Natural killer cell (primary cell): ENCODE measurements at regions of chr11 and their contacts with region 1.

Region 1: GRCh38 chr11:58513747-58514367 is 6.0 kb upstream of the OR5B21 start:
- DNase-seq: peak in 1 of 2 donors; percentile 56
- ATAC-seq: peak in 2 of 3 donors; percentile 60 to 61
- H3K4me3 ChIP-seq: no peak overlapping the region
- H3K4me3 Mint-ChIP-seq: no peak overlapping the region
- H3K27ac ChIP-seq: no peak overlapping the region
- H3K27ac Mint-ChIP-seq: no peak overlapping the region
- H3K4me1 ChIP-seq: no peaks in the 10 kb centered on the region
- H3K4me1 Mint-ChIP-seq: no peaks in the 10 kb centered on the region
- H3K27me3 ChIP-seq: no peaks in the 10 kb centered on the region
- H3K27me3 Mint-ChIP-seq: peaks cover 0 to 3% of the 10 kb centered on the region in 2 donors
- CTCF ChIP-seq: peak; percentile 37

Region 2: GRCh38 chr11:57567515-57568329 is 946.1 kb before region 1 on chr11 and contains the start of gene UBE2L6:
- intact Hi-C with region 1: loop called (anchors 5 kb)
- DNase-seq: peak; percentile 56 to 95
- ATAC-seq: peak; percentile 76 to 91 (median 78)
- H3K4me3 ChIP-seq: peak within 1 kb of the TSS; percentile 99
- H3K4me3 Mint-ChIP-seq: peak within 1 kb of the TSS; percentile 99
- H3K27ac ChIP-seq: peak within 1 kb of the TSS; percentile 95
- H3K27ac Mint-ChIP-seq: peak within 1 kb of the TSS; percentile 96 to 99
- H3K4me1 ChIP-seq: peaks cover 24% of the 10 kb centered on the region
- H3K4me1 Mint-ChIP-seq: peaks cover 40 to 50% of the 10 kb centered on the region in 2 donors
- H3K27me3 ChIP-seq: no peaks in the 10 kb centered on the region
- H3K27me3 Mint-ChIP-seq: no peaks in the 10 kb centered on the region
- CTCF ChIP-seq: peak; percentile 93
- total RNA-seq, gene UBE2L6: 89.1 to 108 (median 103) TPM